Activated naive CD4-positive, alpha-beta T cell treated with anti-CD3 and anti-CD28 coated beads for 36 hours (primary cell): ENCODE measurements at regions of chr19 and their contacts with region 1.

Region 1: GRCh38 chr19:14006243-14006765 is at the start of gene RFX1:
- DNase-seq: peak; percentile 100
- H3K4me3 Mint-ChIP-seq: peak within 1 kb of the TSS; percentile 90
- H3K27ac Mint-ChIP-seq: peak within 1 kb of the TSS; percentile 96
- H3K4me1 Mint-ChIP-seq: peaks cover 39% of the 10 kb centered on the region
- H3K27me3 Mint-ChIP-seq: no peaks in the 10 kb centered on the region
- total RNA-seq, gene RFX1: 13.8 to 14.0 TPM

Region 2: DNA sequence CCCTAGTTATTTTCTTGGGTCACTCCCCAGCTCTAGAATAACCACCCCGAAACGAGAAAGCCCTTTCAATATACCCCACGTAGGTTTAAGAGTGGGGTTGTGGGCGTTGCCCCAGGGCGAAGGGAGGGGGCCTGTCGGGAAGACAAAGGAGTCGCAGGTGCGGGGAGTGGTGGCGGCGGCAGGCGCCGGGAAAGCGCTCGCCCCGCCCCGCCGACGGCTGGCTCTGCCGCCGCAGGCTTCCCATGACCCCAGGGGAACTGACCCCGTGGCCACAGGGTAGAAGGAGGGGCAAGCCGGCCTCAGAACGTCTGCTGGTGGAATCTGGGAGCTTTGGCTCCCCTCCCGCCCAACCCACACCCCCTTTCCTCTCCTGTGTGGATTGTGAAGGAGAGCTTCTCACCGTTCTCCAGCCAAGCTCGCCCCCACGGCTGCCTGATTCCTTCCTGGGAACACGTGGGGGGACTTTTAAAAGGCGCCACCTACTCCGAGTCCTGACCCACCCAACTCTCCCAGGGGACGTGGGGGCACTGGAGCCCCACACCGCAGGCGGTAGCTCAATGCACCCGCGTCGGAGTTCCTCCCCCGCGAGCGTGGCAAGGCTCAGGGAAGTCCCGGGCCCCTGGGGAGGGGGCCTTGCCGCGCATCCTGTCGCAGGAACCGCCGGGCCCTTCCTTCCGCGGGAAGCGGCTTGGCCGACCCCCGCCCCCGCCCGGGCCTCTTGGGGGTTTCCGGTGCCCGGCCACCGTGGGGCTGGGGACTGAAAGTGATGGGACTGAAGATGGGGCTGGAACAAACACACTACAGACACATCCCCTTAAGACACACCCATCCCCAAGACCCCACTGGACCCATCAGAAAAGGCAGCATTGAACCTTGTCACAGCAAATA is 850.6 kb before region 1 on chr19:
- CTCF ChIA-PET with region 1: no interaction called
- intact Hi-C with region 1: loop called (anchors 5 kb)
- DNase-seq: peak; percentile 86
- H3K4me3 Mint-ChIP-seq: peak overlapping the region; percentile 99
- H3K27ac Mint-ChIP-seq: peak overlapping the region; percentile 100
- H3K4me1 Mint-ChIP-seq: peaks cover 40% of the 10 kb centered on the region
- H3K27me3 Mint-ChIP-seq: no peaks in the 10 kb centered on the region

Region 3: DNA sequence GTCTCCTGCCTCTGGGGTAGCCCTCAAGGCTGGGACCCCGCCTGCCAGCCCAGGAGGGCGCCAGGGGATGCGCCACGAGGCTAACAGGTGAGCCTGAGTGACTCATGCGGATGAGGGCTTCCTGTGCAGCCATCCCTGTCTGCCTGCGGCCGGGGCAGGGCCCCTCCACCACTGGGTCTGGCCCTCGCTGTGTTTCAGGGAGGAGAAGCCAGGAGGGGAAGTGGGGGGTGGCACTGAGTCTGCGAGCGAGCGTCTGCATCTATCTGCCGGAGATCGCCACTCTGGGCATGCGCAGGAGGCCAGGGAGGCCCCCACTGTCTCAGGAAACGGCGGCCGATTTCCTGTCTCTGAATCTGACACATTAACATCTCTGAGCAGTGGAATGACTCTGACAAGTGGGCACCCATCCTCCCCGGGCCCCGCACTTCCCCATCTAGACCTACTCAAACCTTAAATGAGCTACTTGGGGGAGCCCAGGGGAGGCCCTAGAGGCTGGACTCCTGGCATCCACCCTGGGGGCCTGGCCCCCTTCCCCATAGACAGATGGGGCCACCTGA is 19.9 kb before region 1 on chr19:
- CTCF ChIA-PET with region 1: interaction called, 3 read pairs
- intact Hi-C with region 1: loop called (anchors 1 kb)
- DNase-seq: peak; percentile 100
- H3K4me3 Mint-ChIP-seq: peak overlapping the region; percentile 65
- H3K27ac Mint-ChIP-seq: peak overlapping the region; percentile 98
- H3K4me1 Mint-ChIP-seq: peaks cover 64% of the 10 kb centered on the region
- H3K27me3 Mint-ChIP-seq: no peaks in the 10 kb centered on the region

Region 4: DNA sequence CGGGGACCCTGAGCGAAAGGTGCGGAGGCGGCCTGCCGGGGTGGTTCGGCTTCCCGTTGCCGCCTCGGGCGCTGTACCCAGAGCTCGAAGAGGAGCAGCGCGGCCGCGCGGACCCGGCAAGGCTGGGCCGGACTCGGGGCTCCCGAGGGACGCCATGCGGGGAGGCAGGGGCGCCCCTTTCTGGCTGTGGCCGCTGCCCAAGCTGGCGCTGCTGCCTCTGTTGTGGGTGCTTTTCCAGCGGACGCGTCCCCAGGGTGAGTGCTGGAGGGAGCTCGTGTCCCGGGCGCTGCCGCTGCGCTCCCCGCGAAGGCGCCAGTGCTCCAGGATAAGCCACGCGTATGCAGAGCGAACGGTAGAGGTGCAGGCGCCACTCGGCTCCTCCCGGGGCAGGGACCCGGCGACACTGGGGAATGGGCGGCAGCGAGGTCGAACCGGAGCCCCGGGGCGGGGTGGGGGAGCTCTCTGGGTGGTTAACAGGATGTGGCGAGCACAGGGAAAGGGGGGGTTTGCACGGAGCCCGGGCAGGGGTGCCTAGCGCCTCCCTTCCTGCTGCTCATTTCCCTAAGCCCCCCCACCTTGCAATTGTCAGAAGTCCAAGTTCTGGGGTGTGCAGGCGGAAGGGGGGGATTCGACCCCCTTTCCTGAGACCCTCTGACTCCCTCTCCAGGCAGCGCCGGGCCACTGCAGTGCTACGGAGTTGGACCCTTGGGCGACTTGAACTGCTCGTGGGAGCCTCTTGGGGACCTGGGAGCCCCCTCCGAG is 25.6 kb after region 1 on chr19 and contains the start of gene IL27RA:
- CTCF ChIA-PET with region 1: interaction called, 10 read pairs
- intact Hi-C with region 1: loop called (anchors 1 kb)
- DNase-seq: peak; percentile 84
- H3K4me3 Mint-ChIP-seq: peak within 1 kb of the TSS; percentile 88
- H3K27ac Mint-ChIP-seq: peak within 1 kb of the TSS; percentile 92
- H3K4me1 Mint-ChIP-seq: peaks cover 26% of the 10 kb centered on the region
- H3K27me3 Mint-ChIP-seq: no peaks in the 10 kb centered on the region
- total RNA-seq, gene IL27RA: 59.3 to 59.4 TPM

Region 5: DNA sequence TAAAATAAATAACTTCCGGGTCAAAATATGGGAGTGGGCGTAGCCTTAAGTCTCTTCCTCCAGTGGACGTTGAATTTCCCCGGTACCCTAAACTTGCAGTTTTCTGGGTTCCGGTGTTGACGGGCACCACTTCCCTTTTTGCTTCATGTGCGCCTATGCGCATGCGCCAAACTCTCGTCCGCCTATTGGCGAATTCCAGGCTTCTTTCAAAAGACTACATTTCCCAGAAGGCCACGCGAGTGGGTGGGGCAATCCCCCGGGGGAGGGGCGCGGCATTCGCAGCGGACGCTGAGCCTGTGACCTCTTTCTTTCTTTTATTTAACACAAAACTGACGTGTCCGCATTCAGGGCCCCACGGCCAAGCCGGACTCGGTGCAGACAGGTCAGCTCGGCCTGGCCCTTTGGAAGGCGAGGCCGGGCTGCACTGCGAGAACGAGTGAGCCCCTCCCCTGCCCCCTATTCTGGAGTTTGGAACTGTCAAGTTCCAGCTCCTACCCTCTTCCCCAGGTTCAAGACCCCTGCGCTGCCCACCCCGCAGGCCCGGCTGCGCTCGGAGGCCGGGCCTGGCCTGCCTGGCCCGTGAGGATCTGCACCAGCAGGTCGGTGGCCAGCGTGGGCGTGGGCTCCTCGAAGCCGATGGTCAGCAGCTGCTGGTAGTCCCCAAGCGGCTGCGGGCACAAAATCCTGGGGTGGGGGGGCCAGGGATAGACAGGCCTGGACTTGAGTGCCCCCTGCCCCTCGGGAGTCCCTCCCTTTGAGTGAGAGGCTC is 75.2 kb after region 1 on chr19:
- CTCF ChIA-PET with region 1: no interaction called
- intact Hi-C with region 1: loop called (anchors 2 kb)
- DNase-seq: peak; percentile 100
- H3K4me3 Mint-ChIP-seq: peak overlapping the region; percentile 95
- H3K27ac Mint-ChIP-seq: peak overlapping the region; percentile 91
- H3K4me1 Mint-ChIP-seq: peaks cover 11% of the 10 kb centered on the region
- H3K27me3 Mint-ChIP-seq: no peaks in the 10 kb centered on the region